ENCODE measurements at regions of chr3 and their contacts with region 1.

Region 1: GRCh38 chr3:57597122-57597923 is at the start of gene ARF4:
- DNase-seq: peak; percentile 99 to 100
- ATAC-seq: peak; percentile 91 to 94 (median 92)
- H3K4me3 ChIP-seq: peak within 1 kb of the TSS; percentile 93
- H3K27ac ChIP-seq: peak within 1 kb of the TSS; percentile 98
- H3K4me1 ChIP-seq: peaks cover 46% of the 10 kb centered on the region
- H3K27me3 ChIP-seq: no peaks in the 10 kb centered on the region
- CTCF ChIP-seq: peak; percentile 10
- total RNA-seq, gene ARF4: 37.7 to 76.7 (median 44.7) TPM

Region 2: DNA sequence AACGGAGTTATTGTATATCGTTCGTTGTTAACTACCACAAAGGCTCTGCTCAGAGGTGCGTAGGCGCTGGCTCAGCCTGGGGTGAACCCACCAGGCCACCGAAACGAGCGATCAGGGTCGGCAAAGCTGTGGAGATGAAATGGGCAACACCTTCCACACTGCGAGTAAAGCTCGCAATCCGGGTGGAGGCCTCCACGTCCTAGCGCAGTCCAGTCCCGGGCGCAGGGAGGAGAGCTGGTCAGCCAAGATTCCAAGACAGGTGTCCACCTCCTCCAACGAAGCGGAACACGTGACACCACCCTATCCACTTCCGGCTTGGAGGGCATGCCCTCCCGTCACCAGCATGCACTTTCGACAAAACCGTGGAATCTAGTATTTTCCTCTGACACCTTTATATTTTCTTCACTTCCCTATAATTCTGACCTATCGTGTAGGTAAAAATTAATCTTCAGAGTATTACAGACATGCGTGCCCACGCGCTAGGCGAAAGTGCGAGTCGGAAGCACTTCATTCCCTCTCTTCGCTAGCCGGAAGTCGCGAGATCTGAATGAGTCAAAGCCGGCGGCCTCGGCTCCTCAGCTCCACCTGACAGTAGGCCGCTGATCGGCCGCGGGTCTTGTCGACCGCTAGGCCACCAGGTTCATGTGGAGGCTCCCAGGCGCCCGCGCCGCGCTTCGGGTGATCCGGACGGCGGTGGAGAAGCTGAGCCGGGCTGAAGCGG is 41.4 kb before region 1 on chr3 and contains the start of gene PDE12:
- intact Hi-C with region 1: loop called (anchors 2 to 5 kb)
- DNase-seq: peak; percentile 87 to 94
- ATAC-seq: peak; percentile 95 to 96 (median 96)
- H3K4me3 ChIP-seq: peak within 1 kb of the TSS; percentile 97
- H3K27ac ChIP-seq: peak within 1 kb of the TSS; percentile 96
- H3K4me1 ChIP-seq: peaks cover 32% of the 10 kb centered on the region
- H3K27me3 ChIP-seq: no peaks in the 10 kb centered on the region
- CTCF ChIP-seq: no peak
- total RNA-seq, gene PDE12: 11.8 to 20.6 (median 17.2) TPM

Measured in psoas muscle (tissue), 8 donors.